ENCODE measurements at regions of chr11 and their contacts with region 1.

Region 1: GRCh38 chr11:47980245-47981049 is at the start of gene PTPRJ:
- DNase-seq: no peak
- ATAC-seq: peak; percentile 66
- H3K4me3 ChIP-seq: peak within 1 kb of the TSS; percentile 61 to 76
- H3K27ac ChIP-seq: peak within 1 kb of the TSS; percentile 74
- H3K4me1 ChIP-seq: peaks cover 36 to 47% of the 10 kb centered on the region in 2 experiments
- H3K27me3 ChIP-seq: no peaks in the 10 kb centered on the region
- CTCF ChIP-seq: no peak
- POLR2A ChIP-seq: no peak
- RAD21 ChIP-seq: no peak
- total RNA-seq, gene PTPRJ: 19.1 TPM

Region 2: GRCh38 chr11:47946682-47947575 is 33.5 kb before region 1 on chr11:
- CTCF ChIA-PET with region 1: no interaction called
- POLR2A ChIA-PET with region 1: interaction called, 8 read pairs
- RAD21 ChIA-PET with region 1: interaction called in 1 of 2 experiments, 4 read pairs
- intact Hi-C with region 1: loop called (anchors 5 kb)
- DNase-seq: peak; percentile 84
- ATAC-seq: peak; percentile 92
- H3K4me3 ChIP-seq: peak overlapping the region in 1 of 2 experiments; percentile 14; a peak in 2 of 4 replicates
- H3K27ac ChIP-seq: peak overlapping the region; percentile 72
- H3K4me1 ChIP-seq: peaks cover 33 to 55% of the 10 kb centered on the region in 2 experiments
- H3K27me3 ChIP-seq: no peaks in the 10 kb centered on the region
- CTCF ChIP-seq: no peak
- POLR2A ChIP-seq: no peak
- RAD21 ChIP-seq: no peak; the same call in 1 of the 2 replicates